ENCODE measurements at regions of chrX and their contacts with region 1.

Region 1: GRCh38 chrX:12974796-12975669 is at the start of gene TMSB4X:
- DNase-seq: peak; percentile 65 to 90 (median 81)
- ATAC-seq: peak; percentile 45
- H3K4me3 ChIP-seq: peak within 1 kb of the TSS; percentile 95 to 98
- H3K4me3 Mint-ChIP-seq: peak within 1 kb of the TSS; percentile 96
- H3K27ac ChIP-seq: peak within 1 kb of the TSS; percentile 87 to 99
- H3K27ac Mint-ChIP-seq: peak within 1 kb of the TSS; percentile 96
- H3K4me1 ChIP-seq: peaks cover 15% of the 10 kb centered on the region
- H3K4me1 Mint-ChIP-seq: peaks cover 32% of the 10 kb centered on the region
- H3K27me3 ChIP-seq: no peaks in the 10 kb centered on the region
- H3K27me3 Mint-ChIP-seq: no peaks in the 10 kb centered on the region
- CTCF ChIP-seq: no peak
- total RNA-seq, gene TMSB4X: 2,374 to 2,465 TPM

Region 2: GRCh38 chrX:12002876-12003275 is 972.2 kb before region 1 on chrX:
- CTCF ChIA-PET with region 1: no interaction called
- POLR2A ChIA-PET with region 1: no interaction called
- intact Hi-C with region 1: no loop called
- DNase-seq: no peak
- ATAC-seq: no peak
- H3K4me3 ChIP-seq: no peak overlapping the region
- H3K4me3 Mint-ChIP-seq: no peak overlapping the region
- H3K27ac ChIP-seq: no peak overlapping the region
- H3K27ac Mint-ChIP-seq: no peak overlapping the region
- H3K4me1 ChIP-seq: no peaks in the 10 kb centered on the region
- H3K4me1 Mint-ChIP-seq: no peaks in the 10 kb centered on the region
- H3K27me3 ChIP-seq: no peaks in the 10 kb centered on the region
- H3K27me3 Mint-ChIP-seq: peaks cover 2% of the 10 kb centered on the region
- CTCF ChIP-seq: no peak

Region 3: GRCh38 chrX:12946838-12947544 is 28.0 kb before region 1 on chrX:
- CTCF ChIA-PET with region 1: interaction called, 71 read pairs
- POLR2A ChIA-PET with region 1: interaction called, 559 read pairs
- intact Hi-C with region 1: loop called (anchors 1 kb)
- DNase-seq: peak; percentile 45 to 87 (median 75)
- ATAC-seq: peak; percentile 28
- H3K4me3 ChIP-seq: no peak overlapping the region
- H3K4me3 Mint-ChIP-seq: peak overlapping the region; percentile 60
- H3K27ac ChIP-seq: peak overlapping the region; percentile 17 to 94
- H3K27ac Mint-ChIP-seq: peak overlapping the region; percentile 98
- H3K4me1 ChIP-seq: peaks cover 44% of the 10 kb centered on the region
- H3K4me1 Mint-ChIP-seq: peaks cover 58% of the 10 kb centered on the region
- H3K27me3 ChIP-seq: no peaks in the 10 kb centered on the region
- H3K27me3 Mint-ChIP-seq: no peaks in the 10 kb centered on the region
- CTCF ChIP-seq: peak; percentile 77

Region 4: GRCh38 chrX:13000301-13000811 is 25.3 kb after region 1 on chrX:
- CTCF ChIA-PET with region 1: interaction called, 7 read pairs
- POLR2A ChIA-PET with region 1: interaction called, 95 read pairs
- intact Hi-C with region 1: loop called in 1 of 2 experiments (anchors 1 kb)
- DNase-seq: peak in 6 of 9 experiments; percentile 31 to 73 (median 54)
- ATAC-seq: peak; percentile 55
- H3K4me3 ChIP-seq: peak overlapping the region; percentile 16 to 40
- H3K4me3 Mint-ChIP-seq: peak overlapping the region; percentile 82
- H3K27ac ChIP-seq: peak overlapping the region; percentile 65 to 84
- H3K27ac Mint-ChIP-seq: peak overlapping the region; percentile 96
- H3K4me1 ChIP-seq: peaks cover 68% of the 10 kb centered on the region
- H3K4me1 Mint-ChIP-seq: peaks cover 79% of the 10 kb centered on the region
- H3K27me3 ChIP-seq: no peaks in the 10 kb centered on the region
- H3K27me3 Mint-ChIP-seq: no peaks in the 10 kb centered on the region
- CTCF ChIP-seq: no peak

Region 5: DNA sequence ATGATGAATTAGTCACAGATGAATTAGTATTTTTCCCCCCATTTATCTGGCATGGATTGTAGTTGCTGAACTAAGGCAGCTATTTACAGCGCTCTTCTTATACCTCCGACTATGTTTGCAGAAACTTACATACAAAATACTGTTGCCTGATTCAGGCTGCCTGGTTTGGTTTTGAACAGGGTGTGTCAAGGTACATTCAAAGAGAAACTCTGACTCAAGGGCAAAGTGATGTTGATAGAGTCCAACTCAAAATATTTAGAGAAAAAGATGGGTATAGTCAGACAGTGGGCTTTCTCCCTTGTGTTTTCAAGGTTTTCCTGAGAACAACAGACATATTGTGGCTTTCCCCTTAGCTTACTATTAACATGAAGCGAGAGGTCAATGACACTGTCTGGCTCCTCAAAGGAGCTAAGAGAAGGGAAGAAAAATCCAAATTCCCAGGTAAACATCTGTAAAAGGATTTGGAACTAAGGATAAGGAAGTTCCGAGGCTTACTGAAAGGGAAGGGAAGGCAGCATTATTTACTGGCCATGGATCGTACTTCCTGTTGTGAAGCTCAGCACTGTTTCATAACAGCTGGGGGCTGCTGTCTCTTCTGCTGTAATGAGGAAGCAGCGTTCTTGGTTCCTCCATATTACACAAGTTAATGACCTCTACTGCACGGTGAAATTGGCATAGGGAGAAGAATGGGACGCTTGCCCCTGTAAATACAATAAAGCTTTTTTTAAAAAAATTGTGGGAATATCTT is 38.5 kb after region 1 on chrX:
- CTCF ChIA-PET with region 1: interaction called, 4 read pairs
- POLR2A ChIA-PET with region 1: interaction called, 19 read pairs
- intact Hi-C with region 1: loop called in 1 of 2 experiments (anchors 5 kb)
- DNase-seq: peak in 2 of 9 experiments; percentile 30 to 65
- ATAC-seq: peak; percentile 78
- H3K4me3 ChIP-seq: peak overlapping the region; percentile 14 to 18
- H3K4me3 Mint-ChIP-seq: peak overlapping the region; percentile 47
- H3K27ac ChIP-seq: peak overlapping the region; percentile 47 to 84
- H3K27ac Mint-ChIP-seq: peak overlapping the region; percentile 95
- H3K4me1 ChIP-seq: peaks cover 42% of the 10 kb centered on the region
- H3K4me1 Mint-ChIP-seq: peaks cover 57% of the 10 kb centered on the region
- H3K27me3 ChIP-seq: no peaks in the 10 kb centered on the region
- H3K27me3 Mint-ChIP-seq: no peaks in the 10 kb centered on the region
- CTCF ChIP-seq: no peak

Region 6: DNA sequence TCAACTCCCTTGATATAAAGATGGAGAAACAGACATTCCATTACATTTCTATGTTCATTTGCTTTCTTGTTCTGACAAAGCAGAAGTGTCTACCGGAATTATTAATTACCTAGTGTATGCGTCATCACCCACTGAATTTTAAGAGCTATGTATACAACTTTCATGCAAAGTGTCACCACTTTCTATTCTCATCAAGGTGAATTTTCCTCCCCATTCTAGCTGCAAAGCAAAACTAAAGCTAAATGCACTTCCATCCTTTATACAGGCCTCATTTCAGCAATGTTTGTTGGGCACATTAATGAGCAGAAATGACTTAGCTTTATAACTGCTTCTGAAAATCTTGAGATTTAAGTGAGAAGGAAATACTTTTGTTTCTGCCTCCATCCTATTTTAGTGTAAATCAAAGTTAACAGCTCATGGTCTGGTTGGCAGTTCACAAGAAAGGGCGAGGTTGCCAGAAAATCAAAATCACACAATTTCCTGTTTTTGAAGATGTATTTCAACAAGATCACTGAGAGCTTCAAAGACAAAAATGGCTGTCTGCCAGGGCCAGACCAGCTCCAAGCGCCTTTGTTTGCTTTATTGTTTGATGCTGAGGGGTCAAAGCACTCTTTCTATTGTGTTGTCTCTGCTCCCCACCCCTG is 76.6 kb after region 1 on chrX:
- CTCF ChIA-PET with region 1: interaction called, 11 read pairs
- POLR2A ChIA-PET with region 1: interaction called, 108 read pairs
- intact Hi-C with region 1: loop called in 1 of 2 experiments (anchors 2 kb)
- DNase-seq: peak in 8 of 9 experiments; percentile 17 to 80 (median 54)
- ATAC-seq: peak; percentile 81
- H3K4me3 ChIP-seq: no peak overlapping the region
- H3K4me3 Mint-ChIP-seq: peak overlapping the region; percentile 50
- H3K27ac ChIP-seq: peak overlapping the region; percentile 39 to 74
- H3K27ac Mint-ChIP-seq: peak overlapping the region; percentile 95
- H3K4me1 ChIP-seq: peaks cover 79% of the 10 kb centered on the region
- H3K4me1 Mint-ChIP-seq: peaks cover 72% of the 10 kb centered on the region
- H3K27me3 ChIP-seq: no peaks in the 10 kb centered on the region
- H3K27me3 Mint-ChIP-seq: no peaks in the 10 kb centered on the region
- CTCF ChIP-seq: no peak

Region 7: DNA sequence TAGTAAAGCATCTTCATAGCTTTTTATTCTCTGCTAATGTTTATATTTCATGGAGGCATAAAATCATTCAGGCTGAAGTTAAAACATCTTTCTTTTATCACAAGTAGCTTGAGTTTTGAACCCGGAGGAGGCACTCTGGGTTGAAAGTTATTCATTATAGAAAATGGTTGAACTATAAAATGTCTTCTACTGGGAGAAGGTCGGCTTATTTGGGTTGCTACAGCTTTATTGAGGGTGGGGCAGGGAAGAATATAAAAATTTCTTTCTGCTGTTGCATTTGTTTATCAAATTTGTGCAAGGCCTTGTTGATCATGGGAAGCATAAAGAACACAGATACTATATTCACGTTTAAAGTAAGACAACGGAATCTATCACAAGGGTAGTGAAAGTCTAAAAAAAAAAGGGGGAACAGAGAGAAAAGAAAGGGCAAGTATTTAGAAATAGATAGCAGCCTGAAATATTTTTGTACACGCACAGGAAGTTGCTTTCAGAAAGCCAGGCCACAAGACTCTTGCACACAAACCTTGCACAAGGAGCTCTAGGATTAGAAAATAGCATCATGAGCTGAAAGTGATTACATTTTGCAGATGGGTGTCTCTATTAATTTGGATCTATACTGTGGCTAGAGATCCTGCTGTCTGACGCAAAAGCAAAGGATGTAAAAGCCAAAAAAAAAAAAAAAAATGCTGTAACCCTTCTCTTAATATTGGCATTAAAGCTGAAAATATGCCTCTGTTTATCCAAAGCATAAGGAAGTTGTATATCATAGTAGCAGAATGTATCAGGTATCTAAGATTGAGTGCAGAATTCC is 106.6 kb after region 1 on chrX:
- CTCF ChIA-PET with region 1: interaction called, 52 read pairs
- POLR2A ChIA-PET with region 1: interaction called, 518 read pairs
- intact Hi-C with region 1: no loop called
- DNase-seq: peak in 2 of 9 experiments; percentile 42 to 70
- ATAC-seq: peak; percentile 33
- H3K4me3 ChIP-seq: peak overlapping the region in 1 of 2 experiments; percentile 22
- H3K4me3 Mint-ChIP-seq: peak overlapping the region; percentile 55
- H3K27ac ChIP-seq: peak overlapping the region; percentile 48 to 73
- H3K27ac Mint-ChIP-seq: peak overlapping the region; percentile 96
- H3K4me1 ChIP-seq: peaks cover 93% of the 10 kb centered on the region
- H3K4me1 Mint-ChIP-seq: peaks cover 85% of the 10 kb centered on the region
- H3K27me3 ChIP-seq: no peaks in the 10 kb centered on the region
- H3K27me3 Mint-ChIP-seq: no peaks in the 10 kb centered on the region
- CTCF ChIP-seq: no peak

Region 8: DNA sequence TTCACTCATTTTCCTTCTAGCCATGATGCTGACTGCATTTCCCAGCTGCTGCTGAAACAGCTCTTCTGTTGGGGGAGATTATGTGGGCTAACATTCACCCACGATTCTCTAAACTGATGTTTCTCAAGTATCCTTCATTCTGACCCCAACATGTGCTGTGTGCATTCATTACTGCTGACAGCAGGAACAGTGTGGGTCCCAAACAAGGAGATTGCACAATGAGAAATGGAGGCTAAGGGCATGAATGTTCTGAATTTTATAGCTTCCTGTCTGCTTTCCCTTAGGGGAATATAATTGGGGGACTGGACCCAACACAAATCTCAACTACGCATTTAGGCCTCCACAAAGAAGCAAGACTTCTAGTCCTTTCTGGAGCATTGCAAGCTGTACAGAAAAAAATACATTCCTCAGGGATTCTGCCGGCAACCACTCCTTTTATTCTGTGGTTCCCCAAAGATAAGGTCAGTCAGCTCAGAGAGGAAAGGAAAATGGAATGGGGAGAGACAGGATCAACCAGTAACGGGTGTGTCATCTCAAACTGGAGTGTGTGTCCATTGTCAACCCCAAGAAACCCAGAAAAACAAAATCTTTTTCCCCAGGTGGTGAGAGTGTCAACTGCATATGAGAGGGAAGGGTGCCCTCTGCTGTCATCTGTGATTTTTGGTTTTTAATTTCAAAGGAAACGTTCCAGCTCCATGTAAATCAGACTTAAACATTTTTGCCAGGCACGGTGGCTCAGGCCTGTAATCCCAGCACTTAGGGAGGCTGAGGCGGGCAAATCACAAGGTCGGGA is 512.9 kb after region 1 on chrX:
- CTCF ChIA-PET with region 1: interaction called, 8 read pairs
- POLR2A ChIA-PET with region 1: interaction called, 7 read pairs
- intact Hi-C with region 1: loop called in 1 of 2 experiments (anchors 2 kb)
- DNase-seq: peak in 8 of 9 experiments; percentile 8 to 75 (median 44)
- ATAC-seq: peak; percentile 78
- H3K4me3 ChIP-seq: no peak overlapping the region
- H3K4me3 Mint-ChIP-seq: no peak overlapping the region
- H3K27ac ChIP-seq: peak overlapping the region in 1 of 2 experiments; percentile 43
- H3K27ac Mint-ChIP-seq: peak overlapping the region; percentile 84
- H3K4me1 ChIP-seq: peaks cover 20% of the 10 kb centered on the region
- H3K4me1 Mint-ChIP-seq: peaks cover 42% of the 10 kb centered on the region
- H3K27me3 ChIP-seq: no peaks in the 10 kb centered on the region
- H3K27me3 Mint-ChIP-seq: no peaks in the 10 kb centered on the region
- CTCF ChIP-seq: peak; percentile 56

Measured in CD8-positive, alpha-beta T cell (primary cell).